Dorsolateral prefrontal cortex (tissue), 120 donors: ENCODE measurements at regions of chr18 and their contacts with region 1.

Region 1: DNA sequence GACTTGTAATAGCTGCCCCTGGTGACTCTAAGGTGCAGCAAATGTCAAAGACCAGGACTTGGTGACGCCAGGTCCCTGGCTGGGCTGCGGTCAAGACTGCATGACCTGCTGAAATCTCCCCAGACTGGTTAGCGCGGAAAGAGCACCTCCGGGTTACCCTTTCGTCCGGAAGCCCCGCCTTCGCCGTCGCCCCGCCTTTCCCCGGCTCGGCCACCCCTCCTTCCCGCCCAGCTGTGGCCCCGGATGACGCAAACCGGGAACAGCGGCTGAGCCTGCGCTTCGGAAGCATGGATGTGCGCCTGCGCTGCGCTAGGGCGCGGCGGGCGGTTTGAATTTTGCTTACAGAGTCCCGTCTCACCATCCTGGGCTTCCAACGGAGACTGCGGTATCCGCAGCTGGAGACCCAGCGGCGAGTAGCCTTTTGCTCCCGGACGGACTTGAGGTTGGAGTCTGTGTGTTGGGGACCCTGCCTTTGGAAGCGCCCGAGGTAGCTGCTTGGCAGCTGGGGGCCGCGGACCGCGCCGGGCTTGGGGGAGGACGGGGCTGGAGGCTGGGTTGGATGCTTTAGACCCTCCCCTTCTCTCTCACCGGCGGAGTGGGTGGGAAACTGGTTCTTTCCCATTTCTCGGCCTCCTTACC is at the start of gene SKA1:
- DNase-seq: peak; percentile 78 to 94 (median 86)
- H3K4me3 ChIP-seq: peak within 1 kb of the TSS; percentile 44 to 80 (median 63)
- H3K27ac ChIP-seq: peak within 1 kb of the TSS in 50 of 59 donors; percentile 1 to 88 (median 73)
- H3K27me3 ChIP-seq: no peaks in the 10 kb centered on the region
- CTCF ChIP-seq: peak in 16 of 56 donors; percentile 3 to 33 (median 13)
- total RNA-seq, gene SKA1: 0.15 to 1.7 (median 0.36) TPM in 76 of 120 experiments, not detected in the others

Region 2: DNA sequence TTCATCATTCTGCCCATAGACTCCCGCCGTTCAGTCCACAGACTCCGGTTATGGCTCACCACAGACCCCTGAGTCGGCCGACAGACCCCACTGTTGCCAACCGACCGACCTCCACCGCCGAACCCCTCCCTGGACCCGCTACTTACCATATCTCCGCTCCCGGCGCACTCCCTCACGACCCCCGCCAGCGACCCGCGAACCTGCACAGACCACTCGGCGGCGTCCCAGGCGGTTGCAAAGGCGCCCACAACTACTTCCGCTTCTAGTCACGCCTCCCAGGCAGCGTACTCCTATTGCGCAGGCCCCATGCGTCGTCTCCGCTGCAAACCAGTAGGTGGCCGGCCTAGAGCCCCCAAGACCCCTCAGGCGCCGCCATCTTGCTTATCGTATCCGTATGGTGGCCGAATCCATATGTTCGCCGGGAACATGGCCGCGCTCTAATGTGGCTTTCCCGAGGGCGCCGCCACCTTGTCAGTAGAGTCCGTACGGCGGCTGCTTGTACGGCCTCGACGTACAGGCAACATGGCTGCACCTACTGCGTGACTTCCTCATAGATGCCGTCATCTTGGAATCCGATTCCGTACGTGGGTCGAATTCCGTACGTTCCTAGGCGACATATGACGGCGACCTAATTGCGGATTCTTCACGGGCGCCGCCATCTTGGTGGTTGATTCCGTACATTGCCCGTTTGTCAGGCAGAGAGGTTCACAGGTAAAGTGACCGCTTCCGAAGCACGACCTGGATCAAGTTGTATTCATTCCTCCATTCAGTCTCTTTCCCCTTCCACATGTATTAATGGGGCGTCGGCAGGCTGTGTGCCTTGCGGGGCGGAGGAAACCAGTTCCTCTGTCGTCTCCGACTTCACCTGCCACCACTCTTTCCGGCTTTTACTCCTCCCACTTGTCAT is 87.2 kb before region 1 on chr18 and contains the start of gene CXXC1:
- intact Hi-C with region 1: loop called (anchors 5 kb)
- DNase-seq: peak; percentile 97 to 100 (median 99)
- H3K4me3 ChIP-seq: peak within 1 kb of the TSS; percentile 52 to 98 (median 83)
- H3K27ac ChIP-seq: peak within 1 kb of the TSS; percentile 68 to 98 (median 93)
- H3K27me3 ChIP-seq: no peaks in the 10 kb centered on the region
- CTCF ChIP-seq: peak in 52 of 56 donors; percentile 25 to 70 (median 53)
- total RNA-seq, gene CXXC1: 39.4 to 103 (median 69.4) TPM

Region 3: GRCh38 chr18:50429207-50429948 is 54.5 kb after region 1 on chr18:
- intact Hi-C with region 1: no loop called
- DNase-seq: no peak
- H3K4me3 ChIP-seq: no peak overlapping the region
- H3K27ac ChIP-seq: no peak overlapping the region
- H3K27me3 ChIP-seq: no peaks in the 10 kb centered on the region
- CTCF ChIP-seq: peak in 55 of 56 donors; percentile 39 to 71 (median 58)